Heart left ventricle (tissue), 16 donors: ENCODE measurements at regions of chr3 and their contacts with region 1.

Region 1: GRCh38 chr3:17407576-17407975 is 334.9 kb downstream of the TBC1D5 start:
- DNase-seq: no peak
- ATAC-seq: no peak
- H3K4me3 ChIP-seq: no peak overlapping the region
- H3K27ac ChIP-seq: no peak overlapping the region
- H3K4me1 ChIP-seq: peaks cover 0 to 4% (median 0%) of the 10 kb centered on the region in 12 donors
- H3K27me3 ChIP-seq: no peaks in the 10 kb centered on the region
- CTCF ChIP-seq: no peak
- POLR2A ChIP-seq: no peak

Region 2: GRCh38 chr3:16618721-16619120 is 788.9 kb before region 1 on chr3:
- intact Hi-C with region 1: loop called in 1 of 10 experiments (anchors 10 kb)
- DNase-seq: no peak
- ATAC-seq: no peak
- H3K4me3 ChIP-seq: no peak overlapping the region
- H3K27ac ChIP-seq: no peak overlapping the region
- H3K4me1 ChIP-seq: no peaks in the 10 kb centered on the region
- H3K27me3 ChIP-seq: no peaks in the 10 kb centered on the region
- CTCF ChIP-seq: no peak
- POLR2A ChIP-seq: no peak

Region 3: DNA sequence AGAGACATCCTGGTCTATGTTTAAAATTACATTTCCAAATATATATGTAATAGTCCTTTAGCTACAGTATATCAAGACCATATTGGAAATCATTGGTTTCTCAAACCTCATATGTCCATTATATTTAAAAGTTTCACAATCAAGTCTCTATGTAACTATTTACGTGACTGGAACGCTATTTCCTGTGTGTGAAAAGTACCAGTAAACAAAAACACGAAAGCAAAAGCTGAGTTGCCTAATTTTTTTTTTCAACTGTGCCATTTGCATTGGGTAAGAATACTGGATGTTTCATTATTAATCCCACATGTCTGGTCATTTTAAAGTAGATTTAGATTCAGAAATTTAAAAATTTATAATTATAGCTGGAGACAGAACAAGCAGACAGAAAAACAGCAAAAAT is 46.6 kb before region 1 on chr3:
- intact Hi-C with region 1: no loop called
- DNase-seq: no peak
- ATAC-seq: no peak
- H3K4me3 ChIP-seq: no peak overlapping the region
- H3K27ac ChIP-seq: no peak overlapping the region
- H3K4me1 ChIP-seq: no peaks in the 10 kb centered on the region
- H3K27me3 ChIP-seq: no peaks in the 10 kb centered on the region
- CTCF ChIP-seq: no peak
- POLR2A ChIP-seq: no peak